ENCODE measurements at regions of chr2 and their contacts with region 1.

Region 1: DNA sequence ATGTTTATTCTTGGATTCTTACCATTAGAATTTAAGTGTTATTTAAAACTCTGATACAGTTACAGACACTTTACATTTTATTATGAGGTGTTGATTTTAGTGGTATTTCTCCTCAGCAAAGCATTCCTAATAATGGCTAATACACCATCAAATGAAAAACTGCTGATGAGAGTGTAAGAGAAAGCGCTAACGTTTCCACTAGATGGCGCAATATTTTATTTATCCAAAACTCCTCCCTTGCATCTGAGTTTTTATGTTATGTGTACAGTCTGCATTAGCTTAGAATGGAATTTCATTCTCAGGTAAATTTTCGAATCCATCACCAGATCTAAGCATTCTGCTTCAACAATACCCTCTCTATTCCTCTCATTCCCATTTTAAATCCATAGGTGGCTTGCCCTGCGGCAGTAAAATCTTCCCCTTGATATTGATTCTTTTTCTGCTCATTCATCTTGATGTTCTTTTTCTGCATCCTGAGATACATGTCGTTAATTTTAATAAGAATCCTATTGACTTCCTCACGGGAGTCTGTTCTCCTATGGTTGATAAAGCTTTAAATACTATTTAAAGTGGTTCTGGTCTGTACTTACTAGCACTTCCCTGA is 53.9 kb downstream of the PRKRA start:
- DNase-seq: peak; percentile 40
- CTCF ChIP-seq: peak; percentile 67

Region 2: GRCh38 chr2:178426388-178426787 is 29.3 kb after region 1 on chr2:
- CTCF ChIA-PET with region 1: interaction called, 14 read pairs
- POLR2A ChIA-PET with region 1: no interaction called
- DNase-seq: no peak
- CTCF ChIP-seq: no peak

Measured in GM10248 (cell line).